ENCODE measurements at regions of chr13 and their contacts with region 1.

Region 1: DNA sequence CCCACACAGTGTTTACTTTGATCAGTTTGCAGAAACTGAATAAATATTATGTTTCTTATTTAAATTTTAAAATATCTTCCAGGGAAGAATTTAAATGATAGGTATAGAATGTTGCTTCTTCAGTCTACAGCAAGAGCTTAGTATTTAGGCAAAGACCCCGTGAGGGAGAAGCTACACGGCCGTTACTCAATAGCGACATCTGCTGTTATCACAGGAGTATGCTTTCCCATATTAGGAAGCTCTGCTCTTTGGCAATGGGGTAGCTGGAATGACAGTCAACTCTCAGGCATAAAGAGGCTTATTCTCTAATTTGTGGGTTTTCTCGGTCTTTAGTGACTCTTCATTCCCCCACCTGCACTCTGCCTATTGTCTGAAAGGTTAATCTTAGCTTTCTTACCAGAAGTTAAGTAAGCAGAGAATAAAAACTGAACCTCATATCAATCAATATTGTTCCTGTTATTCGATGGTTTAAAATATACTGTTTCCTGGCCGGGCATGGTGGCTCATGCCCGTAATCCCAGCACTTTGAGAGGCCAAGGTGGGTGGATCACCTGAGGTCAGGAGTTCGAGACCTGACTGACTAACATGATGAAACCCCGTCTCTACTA is 13.2 kb upstream of the LHFPL6 start:
- DNase-seq: peak; percentile 51
- ATAC-seq: peak; percentile 55
- H3K4me3 Mint-ChIP-seq: no peak overlapping the region
- H3K27ac Mint-ChIP-seq: no peak overlapping the region
- H3K4me1 Mint-ChIP-seq: no peaks in the 10 kb centered on the region
- H3K27me3 Mint-ChIP-seq: peaks cover 7% of the 10 kb centered on the region

Region 2: GRCh38 chr13:38970380-38971051 is 645.7 kb before region 1 on chr13:
- CTCF ChIA-PET with region 1: interaction called, 6 read pairs
- POLR2A ChIA-PET with region 1: no interaction called
- intact Hi-C with region 1: loop called in 1 of 2 experiments (anchors 5 kb)
- DNase-seq: no peak
- ATAC-seq: no peak
- H3K4me3 Mint-ChIP-seq: no peak overlapping the region
- H3K27ac Mint-ChIP-seq: no peak overlapping the region
- H3K4me1 Mint-ChIP-seq: no peaks in the 10 kb centered on the region
- H3K27me3 Mint-ChIP-seq: peaks cover 2% of the 10 kb centered on the region

Region 3: DNA sequence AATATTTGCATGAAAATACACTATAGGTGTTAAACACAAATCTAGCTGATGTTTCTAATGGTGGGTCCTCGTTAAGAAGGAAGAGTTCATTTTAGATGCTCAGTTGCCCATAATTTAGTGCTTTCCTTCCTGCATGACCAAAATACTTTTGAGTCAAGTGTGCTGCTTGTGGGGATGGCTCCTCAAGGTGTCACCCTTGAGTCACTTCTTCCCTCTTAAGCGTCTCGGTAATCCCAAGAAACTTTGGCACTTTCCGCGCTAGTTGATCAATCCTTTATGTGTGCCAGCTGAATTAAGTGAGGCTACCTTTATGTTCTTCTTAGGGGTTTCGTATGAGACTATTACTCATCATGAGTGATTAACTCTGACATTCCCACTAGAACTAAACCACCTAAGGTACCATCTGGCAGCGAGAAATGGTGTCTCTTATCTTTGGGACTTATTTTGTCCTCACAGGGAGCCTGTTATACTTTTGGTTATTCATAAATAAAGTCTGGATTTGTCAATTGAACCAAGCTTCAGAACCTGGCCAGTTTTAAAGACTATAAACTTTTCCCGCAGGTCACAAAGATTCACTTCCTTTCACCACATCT is 471.2 kb before region 1 on chr13:
- CTCF ChIA-PET with region 1: interaction called, 7 read pairs
- POLR2A ChIA-PET with region 1: no interaction called
- intact Hi-C with region 1: loop called (anchors 1 kb)
- DNase-seq: peak; percentile 59
- ATAC-seq: peak; percentile 42
- H3K4me3 Mint-ChIP-seq: no peak overlapping the region
- H3K27ac Mint-ChIP-seq: no peak overlapping the region
- H3K4me1 Mint-ChIP-seq: peaks cover 26% of the 10 kb centered on the region
- H3K27me3 Mint-ChIP-seq: peaks cover 34% of the 10 kb centered on the region

Region 4: GRCh38 chr13:39415008-39415802 is 201.0 kb before region 1 on chr13:
- CTCF ChIA-PET with region 1: interaction called, 6 read pairs
- POLR2A ChIA-PET with region 1: no interaction called
- intact Hi-C with region 1: loop called (anchors 5 to 10 kb)
- DNase-seq: peak; percentile 30
- ATAC-seq: no peak
- H3K4me3 Mint-ChIP-seq: no peak overlapping the region
- H3K27ac Mint-ChIP-seq: no peak overlapping the region
- H3K4me1 Mint-ChIP-seq: no peaks in the 10 kb centered on the region
- H3K27me3 Mint-ChIP-seq: peaks cover 14% of the 10 kb centered on the region

Region 5: DNA sequence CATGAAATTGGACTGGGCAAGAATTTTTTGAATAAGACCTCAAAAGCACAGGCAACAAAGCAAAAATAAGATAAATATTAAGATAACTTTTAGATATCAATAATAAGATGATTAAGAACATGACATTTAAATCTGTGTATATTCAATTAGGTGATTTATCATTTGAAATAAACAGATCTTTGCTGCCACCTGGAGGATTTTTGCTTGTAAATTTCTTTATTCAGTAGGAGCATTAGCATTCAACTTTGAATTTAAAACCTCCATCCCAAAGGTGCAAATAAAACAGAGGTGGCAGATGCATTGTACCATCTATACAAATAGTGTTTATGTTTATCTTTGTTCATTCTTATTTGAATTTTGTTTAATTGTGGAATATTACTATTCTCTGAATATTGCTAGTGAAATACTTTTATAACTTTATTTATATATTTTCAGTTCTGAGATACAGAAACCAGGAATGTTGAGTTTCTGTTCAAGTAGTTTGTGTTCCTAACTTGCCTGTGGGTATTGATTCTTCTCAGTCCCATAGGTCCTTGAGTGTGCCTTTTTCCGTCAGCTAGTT is 60.2 kb after region 1 on chr13:
- CTCF ChIA-PET with region 1: interaction called, 5 read pairs
- POLR2A ChIA-PET with region 1: no interaction called
- intact Hi-C with region 1: loop called in 1 of 2 experiments (anchors 2 kb)
- DNase-seq: peak; percentile 17
- ATAC-seq: no peak
- H3K4me3 Mint-ChIP-seq: no peak overlapping the region
- H3K27ac Mint-ChIP-seq: no peak overlapping the region
- H3K4me1 Mint-ChIP-seq: peaks cover 3% of the 10 kb centered on the region
- H3K27me3 Mint-ChIP-seq: no peaks in the 10 kb centered on the region